WTC11 (cell line): ENCODE measurements at regions of chr12 and their contacts with region 1.

Region 1: GRCh38 chr12:112439769-112440168 is 21.0 kb downstream of the PTPN11 start:
- DNase-seq: no peak
- ATAC-seq: no peak
- H3K4me3 Mint-ChIP-seq: no peak overlapping the region
- H3K27ac Mint-ChIP-seq: no peak overlapping the region
- H3K4me1 Mint-ChIP-seq: no peaks in the 10 kb centered on the region
- H3K27me3 Mint-ChIP-seq: no peaks in the 10 kb centered on the region
- CTCF ChIP-seq: no peak

Region 2: DNA sequence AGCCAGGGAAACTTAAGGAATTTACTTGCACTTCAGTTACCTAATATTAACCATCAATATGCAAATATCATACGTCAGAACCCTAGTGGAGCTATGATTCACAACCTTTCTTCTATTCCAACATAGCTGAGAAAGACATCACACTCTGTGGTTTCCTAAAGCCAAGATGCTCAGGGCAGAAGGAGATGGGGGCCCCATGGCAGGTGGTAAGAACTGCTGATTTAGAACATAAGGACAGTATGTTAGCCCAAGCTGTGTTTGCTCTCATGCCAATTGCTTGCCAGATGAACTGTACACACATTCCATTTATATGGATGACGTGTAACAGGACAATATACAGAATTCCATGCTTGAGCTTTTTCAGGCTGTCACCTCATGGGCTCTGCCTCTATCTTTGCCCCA is 92.2 kb before region 1 on chr12:
- CTCF ChIA-PET with region 1: no interaction called
- POLR2A ChIA-PET with region 1: no interaction called
- DNase-seq: no peak
- ATAC-seq: no peak
- H3K4me3 Mint-ChIP-seq: no peak overlapping the region
- H3K27ac Mint-ChIP-seq: no peak overlapping the region; the same call in 1 of the 2 replicates
- H3K4me1 Mint-ChIP-seq: peaks cover 36% of the 10 kb centered on the region
- H3K27me3 Mint-ChIP-seq: no peaks in the 10 kb centered on the region; the same call in 1 of the 2 replicates
- CTCF ChIP-seq: no peak

Region 3: DNA sequence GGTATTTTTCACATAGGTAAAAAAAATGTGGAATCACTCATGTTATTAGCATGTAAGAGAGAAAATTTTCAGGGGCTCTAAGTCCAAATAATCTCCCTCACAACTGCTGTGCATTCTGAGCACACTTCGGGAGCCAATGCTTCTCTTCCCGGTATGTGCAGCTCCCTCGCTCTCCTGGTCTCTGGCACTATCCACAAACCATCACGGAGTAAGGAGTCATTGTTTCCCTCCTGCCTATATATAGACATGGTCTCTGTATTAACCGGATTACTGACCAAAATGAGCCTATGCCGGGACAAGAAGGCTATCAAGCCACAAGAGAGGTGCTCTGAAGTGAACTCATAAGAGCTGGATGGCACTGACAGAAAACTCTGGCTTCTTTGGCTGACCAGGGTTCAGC is 70.9 kb before region 1 on chr12:
- CTCF ChIA-PET with region 1: no interaction called
- POLR2A ChIA-PET with region 1: interaction called, 10 read pairs
- DNase-seq: no peak
- ATAC-seq: peak; percentile 26
- H3K4me3 Mint-ChIP-seq: no peak overlapping the region
- H3K27ac Mint-ChIP-seq: no peak overlapping the region
- H3K4me1 Mint-ChIP-seq: peaks cover 11% of the 10 kb centered on the region
- H3K27me3 Mint-ChIP-seq: no peaks in the 10 kb centered on the region
- CTCF ChIP-seq: no peak

Region 4: DNA sequence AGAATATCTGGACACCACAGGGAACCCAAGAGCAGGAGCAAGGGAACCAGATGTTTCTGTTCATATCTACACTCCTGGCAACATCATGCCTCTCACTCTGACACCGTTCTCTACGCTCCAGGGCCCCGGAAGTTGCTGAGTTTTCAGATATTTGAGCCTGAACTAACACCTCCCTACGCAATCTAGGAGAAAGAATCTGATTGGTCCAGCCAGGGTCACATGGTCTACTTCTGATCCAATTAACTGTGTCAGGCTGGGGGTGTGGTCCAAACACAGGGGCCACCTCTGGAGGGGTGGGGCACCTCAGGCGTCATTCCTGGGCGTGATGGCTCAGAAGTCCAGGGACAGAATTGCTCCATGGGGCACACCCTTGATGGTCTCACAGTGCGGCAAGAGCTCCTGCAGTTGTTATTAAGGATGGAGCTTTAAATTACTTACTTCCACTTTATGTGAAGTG is 144.5 kb after region 1 on chr12:
- CTCF ChIA-PET with region 1: no interaction called
- POLR2A ChIA-PET with region 1: no interaction called
- DNase-seq: peak; percentile 66
- ATAC-seq: peak; percentile 91
- H3K4me3 Mint-ChIP-seq: no peak overlapping the region
- H3K27ac Mint-ChIP-seq: no peak overlapping the region; the same call in 1 of the 2 replicates
- H3K4me1 Mint-ChIP-seq: peaks cover 15% of the 10 kb centered on the region
- H3K27me3 Mint-ChIP-seq: peaks cover 92% of the 10 kb centered on the region
- CTCF ChIP-seq: no peak

Region 5: GRCh38 chr12:112738531-112738930 is 298.8 kb after region 1 on chr12:
- CTCF ChIA-PET with region 1: no interaction called
- POLR2A ChIA-PET with region 1: no interaction called
- DNase-seq: no peak
- ATAC-seq: no peak
- H3K4me3 Mint-ChIP-seq: no peak overlapping the region
- H3K27ac Mint-ChIP-seq: no peak overlapping the region
- H3K4me1 Mint-ChIP-seq: peaks cover 5% of the 10 kb centered on the region; the same call in 1 of the 2 replicates
- H3K27me3 Mint-ChIP-seq: peaks cover 6% of the 10 kb centered on the region
- CTCF ChIP-seq: no peak